Heart right ventricle (tissue), 16 donors: ENCODE measurements at regions of chr7 and their contacts with region 1.

Region 1: GRCh38 chr7:147321504-147321903 is 1204.9 kb downstream of the CNTNAP2 start:
- DNase-seq: no peak
- ATAC-seq: no peak
- H3K4me3 ChIP-seq: no peak overlapping the region
- H3K27ac ChIP-seq: no peak overlapping the region
- H3K4me1 ChIP-seq: no peaks in the 10 kb centered on the region
- H3K27me3 ChIP-seq: no peaks in the 10 kb centered on the region
- CTCF ChIP-seq: no peak

Region 2: GRCh38 chr7:147089051-147089461 is 232.4 kb before region 1 on chr7:
- intact Hi-C with region 1: no loop called
- DNase-seq: no peak
- ATAC-seq: no peak
- H3K4me3 ChIP-seq: no peak overlapping the region
- H3K27ac ChIP-seq: no peak overlapping the region
- H3K4me1 ChIP-seq: peaks cover 0 to 8% (median 0%) of the 10 kb centered on the region in 9 donors
- H3K27me3 ChIP-seq: no peaks in the 10 kb centered on the region
- CTCF ChIP-seq: no peak

Region 3: DNA sequence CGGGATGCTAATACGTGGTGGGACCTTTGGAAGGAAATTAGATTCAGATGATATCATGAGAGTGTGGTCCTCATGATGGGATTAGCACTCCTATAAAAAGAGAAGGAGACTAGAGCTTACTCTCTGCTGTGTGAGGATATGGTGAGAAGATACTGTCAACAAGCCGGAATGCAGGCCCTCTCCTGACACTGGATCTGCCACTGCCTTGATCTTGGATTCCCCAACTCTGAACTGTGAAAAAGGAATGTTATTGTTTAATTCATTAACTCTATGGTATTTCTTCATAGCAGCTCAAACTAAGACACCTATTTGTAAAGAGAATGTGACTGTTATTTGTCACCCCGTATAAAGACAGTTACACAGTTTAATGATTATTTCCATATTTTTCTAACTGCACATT is 41.6 kb after region 1 on chr7:
- intact Hi-C with region 1: loop called in 1 of 10 experiments (anchors 5 kb)
- DNase-seq: no peak
- ATAC-seq: no peak
- H3K4me3 ChIP-seq: no peak overlapping the region
- H3K27ac ChIP-seq: no peak overlapping the region
- H3K4me1 ChIP-seq: no peaks in the 10 kb centered on the region
- H3K27me3 ChIP-seq: no peaks in the 10 kb centered on the region
- CTCF ChIP-seq: no peak